Right ventricle myocardium inferior (tissue), 1 donor: ENCODE measurements at regions of chr9 and their contacts with region 1.

Region 1: GRCh38 chr9:94166237-94166963 is 82.1 kb downstream of the PTPDC1 start:
- DNase-seq: peak; percentile 98
- ATAC-seq: peak; percentile 83

Region 2: GRCh38 chr9:93761822-93762221 is 404.6 kb before region 1 on chr9:
- intact Hi-C with region 1: no loop called
- DNase-seq: no peak
- ATAC-seq: no peak

Region 3: GRCh38 chr9:94084314-94084713 is 82.1 kb before region 1 on chr9 and contains the start of gene PTPDC1:
- intact Hi-C with region 1: loop called (anchors 5 kb)
- DNase-seq: peak; percentile 49
- ATAC-seq: no peak
- total RNA-seq, gene PTPDC1: 8.5 TPM